HepG2 (cell line): ENCODE measurements at regions of chr3 and their contacts with region 1.

Region 1: GRCh38 chr3:163490119-163490518 is 1588.2 kb downstream of the SI start:
- DNase-seq: peak; percentile 57
- ATAC-seq: peak; percentile 99
- H3K4me3 ChIP-seq: no peak overlapping the region
- H3K27ac ChIP-seq: no peak overlapping the region
- H3K4me1 ChIP-seq: no peaks in the 10 kb centered on the region
- H3K27me3 ChIP-seq: no peaks in the 10 kb centered on the region
- CTCF ChIP-seq: peak; percentile 89
- EP300 ChIP-seq: no peak
- POLR2A ChIP-seq: no peak
- RAD21 ChIP-seq: peak; percentile 43; the same call in 1 of the 2 replicates

Region 2: DNA sequence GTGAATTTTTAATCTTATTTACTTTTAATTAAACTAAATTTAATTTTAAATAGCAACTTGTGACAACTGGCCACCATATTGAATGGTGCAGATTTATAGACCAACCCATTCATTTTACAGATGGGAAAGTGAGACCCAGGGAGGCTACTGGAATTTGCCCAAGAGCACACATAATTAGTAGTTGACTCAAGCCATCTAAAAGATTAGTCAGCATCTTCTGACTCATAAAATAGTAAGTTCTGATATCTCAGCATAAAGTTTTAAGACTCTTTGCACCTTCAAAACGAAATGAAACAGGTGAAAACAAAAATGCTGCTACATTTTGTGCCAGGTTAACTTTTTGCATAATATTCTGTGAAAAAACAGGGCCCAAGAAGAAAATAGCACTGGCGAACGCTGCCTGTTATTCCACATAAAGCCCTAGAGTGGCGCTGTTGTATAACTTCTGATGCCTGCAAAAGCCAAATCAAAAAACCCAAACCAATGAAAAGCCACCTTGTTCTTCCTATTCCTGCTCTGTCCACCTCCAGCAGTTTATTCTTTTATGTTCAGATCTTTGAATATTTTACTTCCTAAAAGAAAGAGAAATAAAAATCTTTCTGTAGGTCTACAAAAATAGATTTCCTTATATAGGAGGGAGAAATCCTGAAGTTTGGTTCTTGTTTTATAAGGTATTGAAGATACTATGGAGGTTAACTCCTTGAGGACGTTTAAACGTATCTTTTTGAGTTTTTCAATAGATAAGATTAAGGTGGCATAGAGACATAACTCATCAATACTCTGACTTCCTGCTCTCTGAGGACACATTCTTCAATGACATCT is 1930.7 kb before region 1 on chr3:
- CTCF ChIA-PET with region 1: interaction called, 12 read pairs
- POLR2A ChIA-PET with region 1: no interaction called
- in situ Hi-C with region 1: loop called (anchors 25 kb)
- intact Hi-C with region 1: loop called (anchors 1 kb)
- DNase-seq: peak; percentile 27
- ATAC-seq: peak; percentile 55; the same call in 2 of the 3 replicates
- H3K4me3 ChIP-seq: no peak overlapping the region
- H3K27ac ChIP-seq: no peak overlapping the region
- H3K4me1 ChIP-seq: no peaks in the 10 kb centered on the region
- H3K27me3 ChIP-seq: no peaks in the 10 kb centered on the region
- CTCF ChIP-seq: peak; percentile 66
- EP300 ChIP-seq: no peak
- POLR2A ChIP-seq: no peak
- RAD21 ChIP-seq: 0 out of 2 replicates have a peak, but pooled peaks have one; percentile 19

Region 3: GRCh38 chr3:161914737-161915417 is 1575.2 kb before region 1 on chr3:
- CTCF ChIA-PET with region 1: no interaction called
- POLR2A ChIA-PET with region 1: no interaction called
- in situ Hi-C with region 1: no loop called
- intact Hi-C with region 1: loop called (anchors 2 kb)
- DNase-seq: peak; percentile 44
- ATAC-seq: peak; percentile 94
- H3K4me3 ChIP-seq: peak overlapping the region in 1 of 3 experiments; percentile 1; a peak in 1 of 6 replicates
- H3K27ac ChIP-seq: no peak overlapping the region
- H3K4me1 ChIP-seq: peaks cover 25% of the 10 kb centered on the region
- H3K27me3 ChIP-seq: no peaks in the 10 kb centered on the region
- CTCF ChIP-seq: peak; percentile 79
- EP300 ChIP-seq: no peak; a peak in 1 of 4 replicates
- POLR2A ChIP-seq: no peak
- RAD21 ChIP-seq: no peak

Region 4: DNA sequence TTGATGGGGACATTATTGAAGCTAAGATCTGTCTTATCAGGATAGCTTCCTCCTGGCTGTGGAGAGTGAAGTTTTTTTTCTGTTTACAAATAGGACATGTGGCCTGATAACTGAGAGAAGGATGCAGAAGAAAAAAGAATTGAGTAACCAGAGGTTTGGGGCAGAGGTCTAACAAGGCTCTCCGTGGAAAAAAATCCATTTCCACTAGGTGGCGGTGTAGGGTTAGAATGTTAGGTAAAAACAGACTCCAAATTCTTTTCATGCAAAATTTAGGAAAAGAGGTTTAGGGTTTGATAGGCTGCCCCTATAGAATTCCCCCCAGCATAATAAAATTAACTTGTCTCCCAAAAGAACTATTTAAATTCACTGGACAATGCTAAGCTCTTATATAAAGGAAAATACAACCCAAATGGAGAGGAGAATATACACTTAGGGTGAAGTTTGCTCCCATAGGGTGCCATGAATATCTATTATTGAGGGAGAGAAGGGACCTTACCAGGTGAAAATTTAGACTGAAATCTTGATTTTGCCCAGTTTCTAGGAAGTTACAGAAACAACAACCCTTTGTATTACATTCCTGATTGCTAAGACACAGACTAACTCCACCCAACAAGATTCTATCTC is 433.1 kb before region 1 on chr3:
- CTCF ChIA-PET with region 1: interaction called, 9 read pairs
- POLR2A ChIA-PET with region 1: no interaction called
- in situ Hi-C with region 1: loop called (anchors 10 kb)
- intact Hi-C with region 1: loop called (anchors 1 kb)
- DNase-seq: peak; percentile 41
- ATAC-seq: peak; percentile 73
- H3K4me3 ChIP-seq: no peak overlapping the region
- H3K27ac ChIP-seq: no peak overlapping the region
- H3K4me1 ChIP-seq: no peaks in the 10 kb centered on the region
- H3K27me3 ChIP-seq: no peaks in the 10 kb centered on the region; a peak in 1 of 5 replicates
- CTCF ChIP-seq: peak; percentile 56
- EP300 ChIP-seq: no peak
- POLR2A ChIP-seq: no peak
- RAD21 ChIP-seq: no peak